Endothelial cell of umbilical vein (primary cell): ENCODE measurements at regions of chr5 and their contacts with region 1.

Region 1: DNA sequence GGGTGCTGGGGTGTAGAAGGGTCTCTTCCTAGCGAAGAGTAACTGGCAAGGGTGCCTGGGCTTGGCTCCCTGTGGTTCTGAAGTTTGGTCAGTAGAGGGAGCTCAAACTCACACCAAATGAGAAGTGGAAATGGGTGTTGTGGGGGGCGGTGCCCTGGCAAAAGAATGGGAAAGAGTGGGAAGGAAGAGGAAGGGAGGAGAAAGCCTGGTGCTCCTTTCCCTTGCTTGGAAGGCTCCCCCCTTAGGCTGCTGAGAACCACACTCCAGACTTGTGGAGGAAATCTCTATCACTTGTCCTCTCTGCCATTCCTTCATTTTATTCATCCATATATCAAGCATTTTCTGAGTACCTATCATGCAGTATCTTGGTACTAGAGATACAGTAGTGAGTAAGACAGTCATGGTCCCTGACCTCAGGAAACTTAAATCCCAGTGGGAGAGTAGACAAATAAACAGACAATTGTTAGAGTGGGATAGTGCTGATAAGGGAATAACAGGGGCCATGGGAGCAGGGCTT is 13.0 kb downstream of the SLC4A9 start:
- DNase-seq: peak; percentile 88
- H3K4me3 ChIP-seq: no peak overlapping the region
- H3K27ac ChIP-seq: no peak overlapping the region
- H3K4me1 ChIP-seq: peaks cover 13% of the 10 kb centered on the region
- H3K27me3 ChIP-seq: no peaks in the 10 kb centered on the region
- CTCF ChIP-seq: peak; percentile 80 to 88
- POLR2A ChIP-seq: no peak

Region 2: GRCh38 chr5:140393738-140394137 is 20.7 kb after region 1 on chr5:
- CTCF ChIA-PET with region 1: interaction called, 14 read pairs
- POLR2A ChIA-PET with region 1: no interaction called
- dilution Hi-C with region 1: no loop called
- intact Hi-C with region 1: no loop called
- DNase-seq: no peak
- H3K4me3 ChIP-seq: no peak overlapping the region
- H3K27ac ChIP-seq: no peak overlapping the region
- H3K4me1 ChIP-seq: no peaks in the 10 kb centered on the region
- H3K27me3 ChIP-seq: no peaks in the 10 kb centered on the region
- CTCF ChIP-seq: no peak
- POLR2A ChIP-seq: no peak

Region 3: GRCh38 chr5:140502834-140503233 is 129.8 kb after region 1 on chr5:
- CTCF ChIA-PET with region 1: no interaction called
- POLR2A ChIA-PET with region 1: no interaction called
- dilution Hi-C with region 1: no loop called
- intact Hi-C with region 1: no loop called
- DNase-seq: no peak
- H3K4me3 ChIP-seq: no peak overlapping the region
- H3K27ac ChIP-seq: no peak overlapping the region
- H3K4me1 ChIP-seq: no peaks in the 10 kb centered on the region
- H3K27me3 ChIP-seq: no peaks in the 10 kb centered on the region
- CTCF ChIP-seq: no peak
- POLR2A ChIP-seq: no peak

Region 4: DNA sequence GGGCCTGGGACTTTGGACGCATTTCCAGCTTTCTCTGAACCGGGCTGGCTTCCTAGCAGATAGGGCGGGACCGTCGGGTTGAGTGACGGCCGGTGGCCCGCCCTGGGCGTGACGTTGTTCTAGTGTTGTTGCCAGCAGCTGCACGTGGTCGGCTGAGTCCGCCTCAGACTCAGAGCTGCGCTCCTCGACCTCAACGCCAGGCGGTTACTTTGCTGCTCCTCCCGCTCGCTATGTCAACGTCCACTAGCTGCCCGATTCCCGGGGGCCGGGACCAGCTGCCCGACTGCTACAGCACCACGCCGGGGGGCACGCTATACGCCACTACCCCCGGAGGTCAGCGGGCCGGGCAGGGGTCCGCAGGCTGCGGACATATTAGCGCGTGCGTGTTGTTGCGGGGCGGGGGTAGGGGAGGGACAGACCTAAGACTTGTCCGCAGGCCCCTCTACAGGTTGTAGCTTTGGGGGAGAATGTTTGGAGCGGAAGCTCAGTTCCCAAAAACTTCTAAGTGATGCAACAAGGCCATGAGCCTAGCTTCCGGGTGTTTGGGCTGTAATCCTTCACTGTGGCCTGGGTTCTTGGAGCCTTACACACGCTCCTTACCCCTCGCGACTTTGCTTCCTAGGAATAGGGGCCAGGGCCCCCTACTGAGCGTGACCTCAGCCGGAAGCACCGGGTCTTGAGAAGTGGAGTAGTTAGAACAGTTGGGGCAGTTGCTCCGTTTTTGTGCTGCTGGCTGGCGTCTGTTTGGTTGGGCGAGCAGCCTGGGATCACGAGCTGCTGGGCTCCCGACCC is 174.7 kb after region 1 on chr5 and contains the start of gene EIF4EBP3:
- CTCF ChIA-PET with region 1: interaction called, 9 read pairs
- POLR2A ChIA-PET with region 1: no interaction called
- dilution Hi-C with region 1: no loop called
- intact Hi-C with region 1: loop called (anchors 2 kb)
- DNase-seq: peak; percentile 98
- H3K4me3 ChIP-seq: peak within 1 kb of the TSS in 1 of 3 experiments; percentile 20
- H3K27ac ChIP-seq: no peak within 1 kb of the TSS
- H3K4me1 ChIP-seq: peaks cover 24% of the 10 kb centered on the region
- H3K27me3 ChIP-seq: no peaks in the 10 kb centered on the region
- CTCF ChIP-seq: peak; percentile 45 to 69
- POLR2A ChIP-seq: no peak
- total RNA-seq, gene EIF4EBP3: 7.6 and 8.8 TPM in 2 replicates

Region 5: GRCh38 chr5:140639148-140639979 is 266.3 kb after region 1 on chr5 and contains the start of gene TMCO6:
- CTCF ChIA-PET with region 1: interaction called, 27 read pairs
- POLR2A ChIA-PET with region 1: no interaction called
- dilution Hi-C with region 1: no loop called
- intact Hi-C with region 1: loop called (anchors 1 kb)
- DNase-seq: peak; percentile 96
- H3K4me3 ChIP-seq: peak within 1 kb of the TSS; percentile 37 to 54 (median 40)
- H3K27ac ChIP-seq: peak within 1 kb of the TSS; percentile 41
- H3K4me1 ChIP-seq: peaks cover 11% of the 10 kb centered on the region
- H3K27me3 ChIP-seq: no peaks in the 10 kb centered on the region
- CTCF ChIP-seq: peak; percentile 31 to 74
- POLR2A ChIP-seq: peak; percentile 89
- total RNA-seq, gene TMCO6: 14.2 and 23.7 TPM in 2 replicates

Region 6: GRCh38 chr5:140710899-140711552 is 338.0 kb after region 1 on chr5:
- CTCF ChIA-PET with region 1: interaction called, 13 read pairs
- POLR2A ChIA-PET with region 1: no interaction called
- dilution Hi-C with region 1: no loop called
- intact Hi-C with region 1: no loop called
- DNase-seq: peak; percentile 100
- H3K4me3 ChIP-seq: peak overlapping the region; percentile 84 to 95 (median 93)
- H3K27ac ChIP-seq: peak overlapping the region; percentile 90
- H3K4me1 ChIP-seq: peaks cover 10% of the 10 kb centered on the region
- H3K27me3 ChIP-seq: no peaks in the 10 kb centered on the region
- CTCF ChIP-seq: no peak
- POLR2A ChIP-seq: no peak